ENCODE measurements at regions of chr4 and their contacts with region 1.

Region 1: GRCh38 chr4:153916273-153916755 is 127.4 kb upstream of the SFRP2 start:
- DNase-seq: peak; percentile 68
- ATAC-seq: peak; percentile 97
- H3K4me3 Mint-ChIP-seq: no peak overlapping the region
- H3K27ac Mint-ChIP-seq: no peak overlapping the region
- H3K4me1 Mint-ChIP-seq: peaks cover 20% of the 10 kb centered on the region
- H3K27me3 Mint-ChIP-seq: peaks cover 28% of the 10 kb centered on the region

Region 2: DNA sequence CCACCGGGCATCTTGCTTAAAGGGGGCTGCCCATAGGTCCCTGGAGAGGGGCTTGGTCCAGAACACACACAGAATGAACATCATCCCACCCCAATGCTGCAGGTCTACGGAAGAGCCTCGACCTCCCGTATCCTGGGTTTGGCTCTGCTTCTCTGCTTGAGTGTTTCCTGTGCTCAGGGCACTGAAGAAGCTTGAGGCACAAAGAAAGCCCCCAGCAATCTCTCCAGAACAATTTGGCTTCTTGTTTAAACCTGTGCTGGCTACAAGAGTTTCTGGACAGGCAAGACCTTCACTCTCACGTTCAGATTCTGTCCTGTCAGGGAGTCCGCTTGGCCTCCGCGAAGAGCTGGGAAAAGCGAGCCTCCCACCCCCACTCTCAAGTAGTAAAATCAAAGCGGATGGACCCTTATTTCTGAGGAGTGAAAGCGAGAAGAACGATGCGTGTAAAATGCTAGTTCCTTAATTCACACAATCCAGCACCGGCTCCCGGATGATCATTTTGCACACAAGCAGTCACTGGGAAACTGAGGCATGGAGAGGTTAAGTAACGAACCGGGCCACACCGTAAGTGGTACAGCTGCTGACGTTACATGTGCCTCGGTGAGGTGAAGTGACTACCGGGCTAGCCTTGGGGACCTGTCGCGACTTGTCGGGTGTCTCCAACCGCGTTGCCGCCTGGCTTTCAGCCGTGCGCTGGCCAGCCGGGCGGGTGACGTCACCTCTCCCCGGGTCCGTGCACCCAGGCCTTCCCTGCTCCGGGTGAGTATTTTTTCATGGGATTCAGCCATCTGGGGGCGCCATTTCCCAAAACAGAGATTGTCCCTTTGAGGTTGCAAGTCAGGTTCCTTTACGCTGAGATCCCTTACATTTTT is 124.3 kb before region 1 on chr4:
- CTCF ChIA-PET with region 1: interaction called, 3 read pairs
- POLR2A ChIA-PET with region 1: no interaction called
- intact Hi-C with region 1: loop called in 1 of 2 experiments (anchors 2 kb)
- DNase-seq: peak; percentile 77
- ATAC-seq: peak; percentile 22
- H3K4me3 Mint-ChIP-seq: peak overlapping the region; percentile 67
- H3K27ac Mint-ChIP-seq: no peak overlapping the region
- H3K4me1 Mint-ChIP-seq: peaks cover 45% of the 10 kb centered on the region
- H3K27me3 Mint-ChIP-seq: peaks cover 79% of the 10 kb centered on the region

Region 3: GRCh38 chr4:153809307-153809706 is 107.0 kb before region 1 on chr4:
- CTCF ChIA-PET with region 1: no interaction called
- POLR2A ChIA-PET with region 1: no interaction called
- intact Hi-C with region 1: loop called (anchors 1 kb)
- DNase-seq: peak; percentile 55
- ATAC-seq: peak; percentile 96
- H3K4me3 Mint-ChIP-seq: no peak overlapping the region
- H3K27ac Mint-ChIP-seq: peak overlapping the region; percentile 16
- H3K4me1 Mint-ChIP-seq: peaks cover 19% of the 10 kb centered on the region
- H3K27me3 Mint-ChIP-seq: peaks cover 4% of the 10 kb centered on the region

Region 4: DNA sequence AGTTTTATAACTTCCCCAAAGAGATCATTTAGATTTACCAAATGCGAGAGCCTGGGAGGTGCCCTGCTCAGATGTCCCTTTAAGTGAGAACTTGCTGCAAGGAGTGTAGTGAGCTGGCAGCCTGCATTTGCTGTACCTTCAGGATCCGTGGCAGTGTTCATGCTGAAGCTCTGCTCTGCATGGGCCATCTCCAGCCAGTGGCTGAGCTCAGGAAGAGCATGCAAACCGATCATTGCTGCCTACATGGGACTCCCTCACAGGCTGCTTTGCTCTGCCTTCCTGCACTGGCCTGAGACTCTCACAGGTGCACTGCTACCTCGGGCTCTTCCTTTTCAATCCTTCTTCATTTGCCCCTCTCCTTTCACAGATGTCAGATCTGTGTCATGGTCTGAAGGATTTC is 24.6 kb after region 1 on chr4:
- CTCF ChIA-PET with region 1: interaction called, 4 read pairs
- POLR2A ChIA-PET with region 1: no interaction called
- intact Hi-C with region 1: loop called (anchors 2 kb)
- DNase-seq: no peak
- ATAC-seq: no peak
- H3K4me3 Mint-ChIP-seq: no peak overlapping the region
- H3K27ac Mint-ChIP-seq: no peak overlapping the region
- H3K4me1 Mint-ChIP-seq: peaks cover 15% of the 10 kb centered on the region
- H3K27me3 Mint-ChIP-seq: peaks cover 41% of the 10 kb centered on the region

Region 5: DNA sequence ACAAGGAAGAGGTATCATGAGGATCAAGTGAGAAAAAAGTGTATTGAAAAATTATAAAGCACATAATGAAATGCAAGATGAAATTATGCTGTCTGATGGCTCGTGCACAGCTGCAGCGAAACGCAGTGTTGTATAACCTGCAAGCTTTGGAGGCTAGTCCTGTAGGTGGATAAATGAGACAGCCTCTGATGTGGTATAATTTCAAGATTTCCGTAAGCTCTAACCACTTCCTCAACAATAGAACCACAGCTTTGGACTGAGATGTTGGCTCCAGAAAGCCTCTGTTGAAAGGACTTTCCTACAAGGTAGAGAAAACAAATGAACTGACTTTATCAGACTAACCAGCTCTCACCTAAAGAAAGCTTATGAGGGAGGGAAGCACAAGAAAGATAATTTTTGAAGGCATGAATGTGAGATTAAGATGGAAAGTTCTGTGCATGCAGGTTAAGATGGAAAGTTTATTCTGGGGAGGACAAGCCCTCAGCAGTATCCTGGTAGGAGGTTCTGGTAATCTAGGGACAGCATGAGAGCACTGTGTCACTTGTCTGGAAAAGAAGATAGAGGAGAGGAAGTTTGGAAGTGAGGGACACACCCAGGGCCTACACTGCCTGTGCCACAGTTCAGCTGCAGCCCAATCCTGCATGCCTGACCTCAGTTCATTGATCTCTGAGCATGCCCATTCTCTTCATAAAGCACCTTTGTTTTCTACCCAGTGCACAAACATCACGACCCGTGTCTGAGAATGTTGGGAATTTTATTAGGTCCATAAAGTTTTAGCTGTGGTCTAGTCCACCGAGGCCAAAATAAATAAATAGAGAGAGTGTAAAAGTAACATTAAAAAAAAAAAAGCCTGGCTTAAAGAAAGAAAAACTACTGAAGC is 34.0 kb after region 1 on chr4:
- CTCF ChIA-PET with region 1: interaction called, 5 read pairs
- POLR2A ChIA-PET with region 1: no interaction called
- intact Hi-C with region 1: loop called (anchors 1 kb)
- DNase-seq: peak; percentile 41
- ATAC-seq: peak; percentile 96
- H3K4me3 Mint-ChIP-seq: no peak overlapping the region
- H3K27ac Mint-ChIP-seq: peak overlapping the region; percentile 7
- H3K4me1 Mint-ChIP-seq: peaks cover 20% of the 10 kb centered on the region
- H3K27me3 Mint-ChIP-seq: peaks cover 36% of the 10 kb centered on the region

Region 6: DNA sequence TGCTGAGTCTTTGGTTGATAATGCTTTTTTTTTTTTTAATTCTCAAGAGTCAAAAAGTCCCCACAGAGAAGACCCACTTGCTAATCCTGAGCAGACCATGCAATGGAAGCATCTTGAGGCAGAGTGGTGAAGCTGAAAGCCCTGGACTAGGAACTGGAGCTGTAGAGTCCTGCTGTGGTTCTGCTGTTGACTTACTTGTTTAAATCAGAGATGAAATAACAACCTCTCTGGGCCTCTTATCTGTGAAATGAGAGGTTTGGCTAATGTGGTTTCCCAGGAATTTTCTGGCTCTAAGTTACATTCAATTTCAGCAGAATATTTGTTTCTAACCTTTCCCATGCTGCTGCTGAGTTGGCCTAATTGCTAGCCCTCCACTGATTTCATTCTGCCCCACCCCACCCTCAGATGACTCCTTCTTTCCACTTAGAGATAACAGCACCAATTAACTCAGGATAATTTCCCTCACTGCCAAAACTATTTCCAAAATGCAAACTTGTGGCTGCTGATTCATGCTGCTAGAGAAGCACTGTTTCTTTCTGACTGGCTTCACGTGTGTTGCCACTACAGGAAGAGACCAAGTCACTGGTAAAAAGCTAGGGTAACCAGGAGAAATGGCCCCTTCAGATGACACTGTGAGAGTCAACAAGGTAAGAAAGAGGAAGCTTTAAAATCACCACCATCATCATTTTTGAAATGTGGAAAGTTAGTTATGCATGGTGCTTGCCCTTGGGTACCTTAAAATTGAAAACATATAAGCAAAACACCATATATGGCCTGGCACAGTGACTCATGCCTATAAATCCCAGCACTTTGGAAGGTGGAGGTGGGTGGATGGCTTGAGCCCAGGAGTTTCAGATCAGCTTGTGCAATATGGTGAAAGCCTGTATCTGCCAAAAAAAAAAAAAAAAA is 248.9 kb after region 1 on chr4:
- CTCF ChIA-PET with region 1: no interaction called
- POLR2A ChIA-PET with region 1: no interaction called
- intact Hi-C with region 1: loop called (anchors 1 kb)
- DNase-seq: peak; percentile 64
- ATAC-seq: peak; percentile 92
- H3K4me3 Mint-ChIP-seq: peak overlapping the region; percentile 1
- H3K27ac Mint-ChIP-seq: peak overlapping the region; percentile 47
- H3K4me1 Mint-ChIP-seq: peaks cover 24% of the 10 kb centered on the region
- H3K27me3 Mint-ChIP-seq: peaks cover 22% of the 10 kb centered on the region